ENCODE measurements at regions of chr14 and their contacts with region 1.

Region 1: DNA sequence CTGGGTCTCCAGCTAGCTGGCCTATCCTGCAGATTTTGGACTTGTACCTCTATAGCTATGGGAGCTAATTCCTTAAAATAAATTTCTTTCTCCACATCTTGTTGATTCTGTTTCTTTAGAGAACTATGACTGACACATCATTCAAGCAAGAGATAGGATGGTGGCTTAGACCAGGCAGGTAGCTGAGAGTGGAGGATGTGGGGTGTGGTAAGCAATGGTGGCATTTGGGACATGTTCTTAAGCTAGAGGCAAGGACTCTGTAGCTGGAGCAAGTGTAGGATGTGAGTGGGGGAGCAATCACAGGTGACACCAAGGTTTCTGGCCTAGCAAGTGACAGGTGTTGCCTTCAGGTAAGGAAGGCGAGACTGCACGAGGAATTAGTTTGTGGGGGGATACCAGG is 6.8 kb downstream of the TDRD9 start:
- DNase-seq: no peak
- ATAC-seq: no peak

Region 2: GRCh38 chr14:103973354-103973753 is 38.3 kb after region 1 on chr14:
- intact Hi-C with region 1: loop called (anchors 5 kb)
- DNase-seq: no peak
- ATAC-seq: peak; percentile 39

Measured in Right ventricle myocardium inferior (tissue), 1 donor.